Gastrocnemius medialis (tissue), 4 donors: ENCODE measurements at regions of chr15 and their contacts with region 1.

Region 1: GRCh38 chr15:69502470-69503045 is 49.9 kb downstream of the RPLP1 start:
- DNase-seq: no peak
- ATAC-seq: no peak
- H3K4me3 ChIP-seq: no peak overlapping the region
- H3K27ac ChIP-seq: no peak overlapping the region
- H3K4me1 ChIP-seq: peaks cover 4 to 14% of the 10 kb centered on the region in 2 donors
- H3K27me3 ChIP-seq: no peaks in the 10 kb centered on the region
- CTCF ChIP-seq: no peak
- POLR2A ChIP-seq: no peak

Region 2: DNA sequence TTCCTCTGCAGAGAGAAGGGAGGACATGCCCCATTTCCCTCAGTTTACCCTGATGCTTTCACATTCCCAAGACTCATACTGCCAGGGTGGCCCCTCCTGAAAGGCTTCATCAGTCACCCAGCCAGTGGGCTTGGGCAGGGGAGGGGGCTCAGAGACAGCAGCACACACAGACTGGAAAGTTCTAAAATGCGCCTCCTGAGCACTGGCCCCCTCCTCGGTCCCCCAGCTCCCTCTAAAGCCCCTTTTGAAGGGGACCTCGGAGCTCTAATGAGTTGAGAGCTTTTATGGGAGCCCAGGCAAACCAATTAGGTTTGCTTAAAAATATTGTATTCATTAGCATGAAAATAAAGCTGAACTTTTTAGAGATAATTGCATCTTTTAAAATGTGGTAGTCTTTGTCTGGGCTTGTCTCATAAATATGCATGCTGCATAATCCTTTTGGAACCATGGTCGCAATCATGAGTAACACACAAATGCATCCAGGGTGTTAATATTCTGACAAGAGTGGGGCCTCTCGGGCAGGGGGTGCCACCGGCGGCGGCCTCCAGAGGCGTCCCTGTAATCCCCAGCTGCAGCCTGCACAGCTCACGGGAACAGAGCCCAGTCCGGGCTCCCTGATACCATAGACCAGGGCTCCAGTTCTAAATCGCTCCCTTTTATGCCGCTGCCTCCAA is 28.6 kb after region 1 on chr15:
- in situ Hi-C with region 1: no loop called
- intact Hi-C with region 1: loop called (anchors 1 kb)
- DNase-seq: no peak
- ATAC-seq: no peak
- H3K4me3 ChIP-seq: no peak overlapping the region
- H3K27ac ChIP-seq: no peak overlapping the region
- H3K4me1 ChIP-seq: no peaks in the 10 kb centered on the region
- H3K27me3 ChIP-seq: peaks cover 0 to 4% (median 0%) of the 10 kb centered on the region in 3 donors
- CTCF ChIP-seq: no peak
- POLR2A ChIP-seq: no peak